Endothelial cell of umbilical vein (primary cell): ENCODE measurements at regions of chr12 and their contacts with region 1.

Region 1: GRCh38 chr12:113152835-113153814 is 3.6 kb downstream of the CFAP73 start:
- DNase-seq: peak; percentile 63
- H3K4me3 ChIP-seq: peak overlapping the region in 1 of 3 experiments; percentile 11
- H3K27ac ChIP-seq: no peak overlapping the region
- H3K4me1 ChIP-seq: no peaks in the 10 kb centered on the region
- H3K27me3 ChIP-seq: peaks cover 22 to 29% of the 10 kb centered on the region in 2 experiments
- CTCF ChIP-seq: peak; percentile 16 to 62
- POLR2A ChIP-seq: no peak

Region 2: GRCh38 chr12:112906712-112907414 is 246.3 kb before region 1 on chr12 and contains the start of gene OAS1:
- CTCF ChIA-PET with region 1: no interaction called
- POLR2A ChIA-PET with region 1: no interaction called
- dilution Hi-C with region 1: no loop called
- intact Hi-C with region 1: loop called (anchors 2 kb)
- DNase-seq: peak; percentile 75
- H3K4me3 ChIP-seq: peak within 1 kb of the TSS in 1 of 3 experiments; percentile 36
- H3K27ac ChIP-seq: no peak within 1 kb of the TSS
- H3K4me1 ChIP-seq: peaks cover 48% of the 10 kb centered on the region
- H3K27me3 ChIP-seq: no peaks in the 10 kb centered on the region
- CTCF ChIP-seq: no peak
- POLR2A ChIP-seq: peak; percentile 43
- total RNA-seq, gene OAS1: 2.9 and 6.4 TPM in 2 replicates

Region 3: DNA sequence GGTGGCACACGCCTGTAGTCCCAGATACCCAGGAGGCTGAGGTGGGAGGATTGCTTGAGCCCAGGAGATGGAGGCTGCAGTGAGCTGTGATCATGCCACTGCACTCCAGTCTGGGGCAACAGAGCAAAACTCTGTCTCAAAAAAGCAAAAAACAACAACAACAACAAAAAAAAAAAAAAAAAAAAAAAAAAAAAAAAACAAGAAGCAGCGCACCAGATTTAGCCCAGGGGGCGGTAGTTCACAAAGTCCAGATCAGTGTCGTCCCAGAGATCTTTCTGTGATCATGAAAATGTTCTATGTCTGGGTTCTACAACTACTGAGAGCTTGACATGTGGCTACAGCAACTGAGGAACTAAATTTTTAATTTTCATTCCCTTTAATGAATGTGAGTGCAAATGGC is 147.4 kb before region 1 on chr12:
- CTCF ChIA-PET with region 1: interaction called, 10 read pairs
- POLR2A ChIA-PET with region 1: no interaction called
- dilution Hi-C with region 1: no loop called
- intact Hi-C with region 1: no loop called
- DNase-seq: no peak
- H3K4me3 ChIP-seq: no peak overlapping the region
- H3K27ac ChIP-seq: no peak overlapping the region
- H3K4me1 ChIP-seq: peaks cover 20% of the 10 kb centered on the region
- H3K27me3 ChIP-seq: no peaks in the 10 kb centered on the region
- CTCF ChIP-seq: peak; percentile 19 to 30
- POLR2A ChIP-seq: no peak

Region 4: GRCh38 chr12:113048716-113049127 is 104.4 kb before region 1 on chr12:
- CTCF ChIA-PET with region 1: interaction called, 10 read pairs
- POLR2A ChIA-PET with region 1: no interaction called
- dilution Hi-C with region 1: no loop called
- intact Hi-C with region 1: loop called (anchors 1 kb)
- DNase-seq: peak; percentile 49
- H3K4me3 ChIP-seq: no peak overlapping the region
- H3K27ac ChIP-seq: no peak overlapping the region
- H3K4me1 ChIP-seq: no peaks in the 10 kb centered on the region
- H3K27me3 ChIP-seq: peaks cover 5 to 6% of the 10 kb centered on the region in 2 experiments
- CTCF ChIP-seq: peak; percentile 71 to 79
- POLR2A ChIP-seq: no peak

Region 5: DNA sequence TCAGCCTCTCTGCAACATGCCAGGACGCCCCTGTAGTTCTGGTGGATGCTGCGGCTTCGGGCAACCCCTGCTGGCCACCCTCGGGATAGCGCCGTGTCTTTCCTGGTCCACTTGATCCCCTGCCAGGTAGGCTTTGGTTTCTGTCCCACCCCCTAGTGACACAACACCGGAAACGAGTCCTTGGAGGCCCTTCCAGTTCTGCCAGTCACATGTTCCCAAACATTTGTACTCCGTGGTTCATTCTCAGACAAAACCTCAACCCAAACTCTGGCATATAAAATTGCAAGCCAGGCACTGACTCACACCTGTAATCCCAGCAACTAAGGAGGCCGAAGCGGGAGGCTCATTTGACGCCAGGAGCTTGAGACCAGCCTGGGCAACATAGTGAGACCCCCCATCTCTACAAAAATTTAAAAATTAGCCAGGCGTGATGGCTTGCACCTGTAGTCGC is 54.7 kb before region 1 on chr12:
- CTCF ChIA-PET with region 1: interaction called, 3 read pairs
- POLR2A ChIA-PET with region 1: no interaction called
- dilution Hi-C with region 1: no loop called
- intact Hi-C with region 1: loop called (anchors 5 kb)
- DNase-seq: peak; percentile 54
- H3K4me3 ChIP-seq: no peak overlapping the region
- H3K27ac ChIP-seq: no peak overlapping the region
- H3K4me1 ChIP-seq: no peaks in the 10 kb centered on the region
- H3K27me3 ChIP-seq: no peaks in the 10 kb centered on the region
- CTCF ChIP-seq: peak; percentile 75 to 87
- POLR2A ChIP-seq: no peak

Region 6: GRCh38 chr12:113174461-113175384 is 21.6 kb after region 1 on chr12:
- CTCF ChIA-PET with region 1: interaction called, 21 read pairs
- POLR2A ChIA-PET with region 1: no interaction called
- dilution Hi-C with region 1: no loop called
- intact Hi-C with region 1: no loop called
- DNase-seq: peak; percentile 66
- H3K4me3 ChIP-seq: no peak overlapping the region
- H3K27ac ChIP-seq: no peak overlapping the region
- H3K4me1 ChIP-seq: no peaks in the 10 kb centered on the region
- H3K27me3 ChIP-seq: no peaks in the 10 kb centered on the region
- CTCF ChIP-seq: peak; percentile 95
- POLR2A ChIP-seq: no peak